ENCODE measurements at regions of chr19 and their contacts with region 1.

Region 1: GRCh38 chr19:34501339-34502320 is 20.1 kb downstream of the WTIP start:
- DNase-seq: peak; percentile 93 to 98
- H3K4me3 ChIP-seq: no peak overlapping the region
- H3K27ac ChIP-seq: peak overlapping the region; percentile 61 to 83
- H3K4me1 ChIP-seq: peaks cover 0 to 42% (median 14%) of the 10 kb centered on the region in 4 donors
- H3K27me3 ChIP-seq: no peaks in the 10 kb centered on the region
- CTCF ChIP-seq: peak; percentile 100

Region 2: DNA sequence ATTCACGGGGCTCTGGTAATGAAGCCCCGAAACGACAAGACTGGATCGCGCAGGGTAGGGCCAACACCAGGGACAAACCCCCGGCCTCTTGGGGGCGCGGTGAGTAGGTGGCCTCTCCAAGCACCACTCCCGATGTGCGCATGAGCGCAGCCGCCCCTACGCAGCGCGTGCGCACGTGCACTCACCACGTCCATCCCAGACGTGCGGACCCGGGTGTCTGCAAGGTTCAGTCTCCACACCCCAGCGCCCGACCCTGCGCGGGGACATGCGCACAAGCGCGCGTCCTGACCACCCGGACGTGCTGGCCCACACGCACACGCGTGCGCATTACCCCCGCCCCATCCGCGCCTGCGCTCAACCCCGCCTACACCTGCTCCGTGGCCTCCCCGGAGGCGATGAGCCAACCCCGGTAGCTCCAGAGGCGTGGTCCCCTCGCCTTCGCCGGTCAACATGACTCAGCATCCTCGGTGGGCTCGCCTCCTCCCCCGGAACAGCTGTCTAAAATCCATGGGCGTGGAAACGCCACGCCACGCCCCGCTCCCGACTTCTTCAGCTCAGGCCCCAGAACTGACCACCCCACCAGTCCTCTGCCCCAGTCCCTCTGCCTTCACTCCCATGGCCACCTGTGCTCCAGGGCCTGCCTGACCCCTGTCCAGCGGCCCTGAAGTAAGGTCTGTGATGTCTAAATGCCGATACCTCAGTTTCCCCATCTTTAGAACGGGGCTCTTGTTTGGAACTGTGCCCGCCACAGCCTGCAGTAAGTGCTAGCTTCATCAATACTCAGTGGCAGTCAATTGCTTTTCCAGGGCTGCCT is 142.3 kb before region 1 on chr19:
- intact Hi-C with region 1: loop called (anchors 5 kb)
- DNase-seq: peak; percentile 94 to 97
- H3K4me3 ChIP-seq: peak overlapping the region; percentile 47 to 57
- H3K27ac ChIP-seq: peak overlapping the region; percentile 84 to 87
- H3K4me1 ChIP-seq: peaks cover 0 to 15% (median 7%) of the 10 kb centered on the region in 4 donors
- H3K27me3 ChIP-seq: no peaks in the 10 kb centered on the region
- CTCF ChIP-seq: peak; percentile 48 to 50

Region 3: DNA sequence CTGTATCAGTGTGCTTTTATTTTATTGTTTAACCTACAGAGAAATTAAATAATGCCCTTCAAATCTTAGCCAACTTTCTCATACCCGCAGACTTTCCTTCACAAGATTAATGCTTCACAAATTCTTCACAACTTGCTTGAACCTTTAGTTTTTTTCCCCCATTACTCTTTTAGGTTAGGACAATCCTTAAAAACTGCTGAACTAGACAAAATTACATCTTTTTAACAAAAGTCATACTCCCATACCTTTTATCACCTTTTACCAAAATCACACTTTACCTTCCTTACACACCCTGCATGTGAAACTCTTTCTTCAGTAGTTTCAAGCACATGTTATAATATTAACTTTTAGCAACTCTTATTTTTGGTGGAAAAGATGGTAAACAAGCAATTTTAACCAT is 116.8 kb after region 1 on chr19:
- intact Hi-C with region 1: no loop called
- DNase-seq: no peak
- H3K4me3 ChIP-seq: no peak overlapping the region
- H3K27ac ChIP-seq: no peak overlapping the region
- H3K4me1 ChIP-seq: no peaks in the 10 kb centered on the region
- H3K27me3 ChIP-seq: no peaks in the 10 kb centered on the region
- CTCF ChIP-seq: no peak